K562 (cell line): ENCODE measurements at regions of chr6 and their contacts with region 1.

Region 1: GRCh38 chr6:110958329-110959192 is at the start of gene GTF3C6:
- DNase-seq: peak; percentile 81 to 94 (median 83)
- ATAC-seq: peak; percentile 98
- H3K4me3 ChIP-seq: peak within 1 kb of the TSS; percentile 62
- H3K27ac ChIP-seq: peak within 1 kb of the TSS; percentile 90
- H3K4me1 ChIP-seq: peaks cover 0 to 17% of the 10 kb centered on the region in 2 experiments; a peak in 4 of 5 replicates
- H3K27me3 ChIP-seq: no peaks in the 10 kb centered on the region
- CTCF ChIP-seq: no peak
- EP300 ChIP-seq: no peak
- POLR2A ChIP-seq: peak; percentile 99
- RAD21 ChIP-seq: no peak; a peak in 1 of 4 replicates
- polyA plus RNA-seq, gene GTF3C6: 105 to 127 TPM

Region 2: DNA sequence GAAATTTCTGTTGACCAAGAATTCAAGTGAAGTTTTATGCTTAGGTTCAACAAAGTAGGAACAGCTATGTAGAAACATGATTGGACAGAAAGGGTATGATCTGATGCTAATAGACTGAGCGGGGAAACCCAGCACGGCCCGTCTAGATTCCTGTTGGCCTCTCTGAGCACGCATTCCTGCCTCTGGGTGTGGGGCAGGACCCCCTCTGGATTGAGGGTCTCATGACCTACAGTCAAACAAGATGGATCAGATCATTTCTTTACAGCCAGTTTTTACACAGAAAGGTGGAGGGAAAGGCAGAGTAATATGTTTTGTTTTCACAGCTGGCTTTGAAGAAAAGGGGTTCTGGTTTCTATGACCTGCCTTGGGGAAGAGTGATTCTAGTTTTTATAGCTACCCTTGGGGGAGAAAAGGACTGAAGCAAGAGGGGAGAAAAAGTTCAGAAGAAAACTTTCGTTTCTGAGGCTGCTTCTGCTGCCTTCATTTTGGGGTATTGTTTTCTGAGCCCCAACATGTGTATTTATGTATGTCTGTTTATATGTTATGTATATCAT is 382.6 kb before region 1 on chr6:
- CTCF ChIA-PET with region 1: no interaction called
- POLR2A ChIA-PET with region 1: no interaction called
- in situ Hi-C with region 1: no loop called
- intact Hi-C with region 1: no loop called
- DNase-seq: no peak
- ATAC-seq: no peak
- H3K4me3 ChIP-seq: no peak overlapping the region
- H3K27ac ChIP-seq: no peak overlapping the region
- H3K4me1 ChIP-seq: no peaks in the 10 kb centered on the region
- H3K27me3 ChIP-seq: peaks cover 0 to 4% of the 10 kb centered on the region in 2 experiments; a peak in 1 of 5 replicates
- CTCF ChIP-seq: no peak
- EP300 ChIP-seq: no peak
- POLR2A ChIP-seq: no peak
- RAD21 ChIP-seq: no peak

Region 3: DNA sequence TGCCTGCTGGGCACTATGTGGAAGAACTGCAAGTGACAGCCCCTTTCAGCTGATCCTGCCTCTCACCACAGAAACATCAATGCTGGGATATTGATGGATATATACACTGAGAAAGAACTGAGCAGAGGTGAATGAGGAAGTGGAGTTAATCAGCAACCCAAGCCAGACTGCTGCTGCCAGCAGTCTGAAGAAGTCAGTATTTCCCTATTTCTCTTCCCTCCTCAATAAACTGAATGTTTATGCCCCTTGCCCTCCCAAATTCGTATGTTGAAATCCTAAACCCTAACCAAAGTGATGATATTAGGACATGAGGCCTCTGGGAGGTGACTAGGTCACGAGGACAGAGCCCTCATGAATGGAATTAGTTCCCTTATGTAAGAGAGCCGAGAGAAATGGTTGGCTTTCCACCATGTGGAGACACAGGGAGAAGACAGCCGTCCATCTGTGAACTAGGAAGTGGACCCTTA is 219.6 kb before region 1 on chr6:
- CTCF ChIA-PET with region 1: no interaction called
- POLR2A ChIA-PET with region 1: no interaction called
- in situ Hi-C with region 1: no loop called
- intact Hi-C with region 1: no loop called
- DNase-seq: no peak
- ATAC-seq: peak; percentile 59; the same call in 2 of the 3 replicates
- H3K4me3 ChIP-seq: no peak overlapping the region
- H3K27ac ChIP-seq: peak overlapping the region; percentile 16; the same call in 1 of the 3 replicates
- H3K4me1 ChIP-seq: no peaks in the 10 kb centered on the region
- H3K27me3 ChIP-seq: no peaks in the 10 kb centered on the region
- CTCF ChIP-seq: no peak
- EP300 ChIP-seq: no peak
- POLR2A ChIP-seq: no peak
- RAD21 ChIP-seq: no peak

Region 4: DNA sequence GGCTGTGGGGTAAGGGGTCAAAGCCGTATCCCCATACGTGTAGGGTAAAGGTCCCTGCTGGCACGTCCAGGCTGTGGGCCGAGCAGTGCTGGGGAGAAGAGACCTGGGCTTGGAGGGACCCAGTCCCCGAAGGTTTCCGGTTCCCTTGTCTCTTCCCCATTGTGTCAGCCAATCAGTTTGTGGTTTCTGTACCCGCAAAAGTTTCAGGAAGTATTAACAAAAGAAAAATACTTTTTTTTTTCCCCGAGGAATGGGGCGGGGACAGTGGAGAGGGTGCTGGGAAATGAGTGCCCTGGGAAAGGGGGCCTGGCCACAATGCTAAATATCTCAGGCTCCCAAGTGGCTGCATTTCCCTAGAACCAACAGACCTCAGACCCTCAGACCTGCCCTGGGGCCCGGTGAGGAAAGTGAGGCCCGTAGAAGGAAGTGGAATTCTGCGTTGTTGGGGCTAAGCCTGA is 99.2 kb before region 1 on chr6:
- CTCF ChIA-PET with region 1: no interaction called
- POLR2A ChIA-PET with region 1: no interaction called
- in situ Hi-C with region 1: no loop called
- intact Hi-C with region 1: no loop called
- DNase-seq: no peak
- ATAC-seq: peak; percentile 27; the same call in 2 of the 3 replicates
- H3K4me3 ChIP-seq: no peak overlapping the region
- H3K27ac ChIP-seq: no peak overlapping the region
- H3K4me1 ChIP-seq: peaks cover 0 to 6% of the 10 kb centered on the region in 2 experiments; a peak in 2 of 5 replicates
- H3K27me3 ChIP-seq: no peaks in the 10 kb centered on the region
- CTCF ChIP-seq: no peak
- EP300 ChIP-seq: no peak
- POLR2A ChIP-seq: no peak
- RAD21 ChIP-seq: no peak

Region 5: DNA sequence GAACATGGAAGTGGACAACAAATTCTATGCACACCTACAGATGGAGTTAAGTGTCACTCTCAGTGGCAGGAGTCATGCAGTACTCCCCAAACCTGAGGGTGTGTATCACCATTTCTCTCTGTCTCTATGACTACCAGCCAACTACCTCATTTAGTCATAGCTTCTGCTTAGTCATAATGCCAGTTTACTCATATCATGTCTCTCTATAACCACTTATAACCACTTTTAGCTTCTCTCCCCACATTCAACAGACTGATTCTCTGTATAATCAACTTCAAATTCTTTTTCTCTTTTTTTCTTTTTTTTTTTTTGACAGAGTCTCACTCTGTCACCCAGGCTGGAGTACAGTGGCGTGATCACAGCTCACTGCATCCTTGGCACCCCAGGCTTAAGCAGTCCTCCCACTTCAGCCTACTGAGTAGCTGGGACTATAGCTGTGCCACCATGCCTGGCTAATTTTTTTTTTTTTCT is 13.8 kb before region 1 on chr6:
- CTCF ChIA-PET with region 1: interaction called, 3 read pairs
- POLR2A ChIA-PET with region 1: interaction called, 10 read pairs
- in situ Hi-C with region 1: no loop called
- intact Hi-C with region 1: no loop called
- DNase-seq: peak; percentile 26 to 47 (median 38)
- ATAC-seq: peak; percentile 77
- H3K4me3 ChIP-seq: no peak overlapping the region
- H3K27ac ChIP-seq: no peak overlapping the region
- H3K4me1 ChIP-seq: peaks cover 0 to 5% of the 10 kb centered on the region in 2 experiments; a peak in 1 of 5 replicates
- H3K27me3 ChIP-seq: no peaks in the 10 kb centered on the region
- CTCF ChIP-seq: no peak
- EP300 ChIP-seq: 0 out of 2 replicates have a peak, but pooled peaks have one; percentile 16
- POLR2A ChIP-seq: no peak
- RAD21 ChIP-seq: no peak

Region 6: GRCh38 chr6:110971468-110971867 is 12.9 kb after region 1 on chr6:
- CTCF ChIA-PET with region 1: no interaction called
- POLR2A ChIA-PET with region 1: interaction called, 57 read pairs
- in situ Hi-C with region 1: no loop called
- intact Hi-C with region 1: no loop called
- DNase-seq: no peak
- ATAC-seq: no peak
- H3K4me3 ChIP-seq: no peak overlapping the region
- H3K27ac ChIP-seq: no peak overlapping the region
- H3K4me1 ChIP-seq: peaks cover 0 to 2% of the 10 kb centered on the region in 2 experiments; a peak in 1 of 5 replicates
- H3K27me3 ChIP-seq: no peaks in the 10 kb centered on the region
- CTCF ChIP-seq: no peak
- EP300 ChIP-seq: no peak
- POLR2A ChIP-seq: no peak
- RAD21 ChIP-seq: no peak

Region 7: GRCh38 chr6:110981202-110981600 is 22.6 kb after region 1 on chr6:
- CTCF ChIA-PET with region 1: no interaction called
- POLR2A ChIA-PET with region 1: interaction called, 11 read pairs
- in situ Hi-C with region 1: no loop called
- intact Hi-C with region 1: loop called (anchors 2 kb)
- DNase-seq: no peak
- ATAC-seq: peak; percentile 5; the same call in 2 of the 3 replicates
- H3K4me3 ChIP-seq: peak overlapping the region; percentile 59
- H3K27ac ChIP-seq: peak overlapping the region; percentile 80; the same call in 2 of the 3 replicates
- H3K4me1 ChIP-seq: peaks cover 8 to 12% of the 10 kb centered on the region in 2 experiments; a peak in 4 of 5 replicates
- H3K27me3 ChIP-seq: no peaks in the 10 kb centered on the region
- CTCF ChIP-seq: no peak
- EP300 ChIP-seq: no peak
- POLR2A ChIP-seq: no peak
- RAD21 ChIP-seq: no peak

Region 8: GRCh38 chr6:111793711-111794111 is 835.1 kb after region 1 on chr6:
- CTCF ChIA-PET with region 1: no interaction called
- POLR2A ChIA-PET with region 1: no interaction called
- in situ Hi-C with region 1: no loop called
- intact Hi-C with region 1: no loop called
- DNase-seq: peak in 2 of 4 experiments; percentile 27 to 48
- ATAC-seq: peak; percentile 76
- H3K4me3 ChIP-seq: no peak overlapping the region
- H3K27ac ChIP-seq: peak overlapping the region; percentile 37; the same call in 1 of the 3 replicates
- H3K4me1 ChIP-seq: peaks cover 0 to 17% of the 10 kb centered on the region in 2 experiments; a peak in 3 of 5 replicates
- H3K27me3 ChIP-seq: no peaks in the 10 kb centered on the region; a peak in 1 of 5 replicates
- CTCF ChIP-seq: no peak
- EP300 ChIP-seq: no peak
- POLR2A ChIP-seq: peak; percentile 45; the same call in 1 of the 2 replicates
- RAD21 ChIP-seq: no peak